H1 (cell line): ENCODE measurements at regions of chr10 and their contacts with region 1.

Region 1: GRCh38 chr10:54120806-54121205 is 680.2 kb downstream of the PCDH15 start:
- DNase-seq: no peak
- H3K4me3 ChIP-seq: no peak overlapping the region
- H3K27ac ChIP-seq: no peak overlapping the region
- H3K4me1 ChIP-seq: no peaks in the 10 kb centered on the region
- H3K27me3 ChIP-seq: no peaks in the 10 kb centered on the region
- CTCF ChIP-seq: no peak
- EP300 ChIP-seq: no peak
- POLR2A ChIP-seq: no peak
- RAD21 ChIP-seq: no peak

Region 2: GRCh38 chr10:54133203-54133602 is 12.4 kb after region 1 on chr10:
- CTCF ChIA-PET with region 1: interaction called, 13 read pairs
- POLR2A ChIA-PET with region 1: no interaction called
- DNase-seq: no peak
- H3K4me3 ChIP-seq: no peak overlapping the region
- H3K27ac ChIP-seq: no peak overlapping the region
- H3K4me1 ChIP-seq: no peaks in the 10 kb centered on the region; a peak in 1 of 7 replicates
- H3K27me3 ChIP-seq: no peaks in the 10 kb centered on the region
- CTCF ChIP-seq: peak in 2 of 3 experiments; percentile 1 to 40; a peak in 2 of 4 replicates
- EP300 ChIP-seq: no peak
- POLR2A ChIP-seq: no peak
- RAD21 ChIP-seq: peak; percentile 46 to 47

Region 3: GRCh38 chr10:54148506-54148905 is 27.7 kb after region 1 on chr10:
- CTCF ChIA-PET with region 1: no interaction called
- POLR2A ChIA-PET with region 1: no interaction called
- DNase-seq: no peak
- H3K4me3 ChIP-seq: no peak overlapping the region
- H3K27ac ChIP-seq: no peak overlapping the region
- H3K4me1 ChIP-seq: no peaks in the 10 kb centered on the region
- H3K27me3 ChIP-seq: no peaks in the 10 kb centered on the region
- CTCF ChIP-seq: no peak
- EP300 ChIP-seq: no peak
- POLR2A ChIP-seq: no peak
- RAD21 ChIP-seq: no peak